ENCODE measurements at regions of chr1 and their contacts with region 1.

Region 1: GRCh38 chr1:242023805-242024204 is 24.9 kb upstream of the MAP1LC3C start:
- DNase-seq: no peak
- ATAC-seq: no peak
- H3K4me3 ChIP-seq: no peak overlapping the region
- H3K27ac ChIP-seq: no peak overlapping the region
- H3K4me1 ChIP-seq: no peaks in the 10 kb centered on the region
- H3K27me3 ChIP-seq: peaks cover 0 to 5% (median 0%) of the 10 kb centered on the region in 9 donors
- CTCF ChIP-seq: no peak
- POLR2A ChIP-seq: no peak

Region 2: DNA sequence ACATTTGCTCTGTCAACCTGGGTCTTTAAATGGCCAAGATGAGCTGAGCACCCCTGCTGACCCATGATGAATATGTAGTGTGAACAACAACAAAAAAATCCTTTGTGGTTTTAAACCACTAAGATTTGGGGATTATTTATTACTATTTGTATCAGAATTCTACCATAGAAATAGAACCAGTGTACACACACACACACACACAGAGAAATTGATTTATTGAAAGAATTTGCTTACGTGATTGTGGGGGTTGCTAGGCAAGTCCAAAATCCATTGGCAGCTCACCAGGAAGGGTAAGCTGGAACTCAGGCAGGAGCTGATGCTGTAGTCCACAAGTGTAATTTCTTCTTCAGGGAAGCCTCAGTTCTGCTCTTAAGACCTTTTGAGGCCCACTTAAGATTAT is 57.6 kb after region 1 on chr1:
- intact Hi-C with region 1: no loop called
- DNase-seq: no peak
- ATAC-seq: no peak
- H3K4me3 ChIP-seq: no peak overlapping the region
- H3K27ac ChIP-seq: no peak overlapping the region
- H3K4me1 ChIP-seq: no peaks in the 10 kb centered on the region
- H3K27me3 ChIP-seq: no peaks in the 10 kb centered on the region
- CTCF ChIP-seq: no peak
- POLR2A ChIP-seq: no peak

Region 3: GRCh38 chr1:242318140-242318539 is 294.3 kb after region 1 on chr1:
- intact Hi-C with region 1: no loop called
- DNase-seq: peak in 1 of 5 donors; percentile 17
- ATAC-seq: no peak
- H3K4me3 ChIP-seq: no peak overlapping the region
- H3K27ac ChIP-seq: no peak overlapping the region
- H3K4me1 ChIP-seq: no peaks in the 10 kb centered on the region
- H3K27me3 ChIP-seq: no peaks in the 10 kb centered on the region
- CTCF ChIP-seq: no peak
- POLR2A ChIP-seq: no peak

Region 4: GRCh38 chr1:242454262-242455045 is 430.6 kb after region 1 on chr1:
- intact Hi-C with region 1: loop called in 1 of 10 experiments (anchors 10 kb)
- DNase-seq: no peak
- ATAC-seq: no peak
- H3K4me3 ChIP-seq: no peak overlapping the region
- H3K27ac ChIP-seq: no peak overlapping the region
- H3K4me1 ChIP-seq: no peaks in the 10 kb centered on the region
- H3K27me3 ChIP-seq: peaks cover 0 to 38% (median 0%) of the 10 kb centered on the region in 9 donors
- CTCF ChIP-seq: peak; percentile 38 to 72 (median 57)
- POLR2A ChIP-seq: no peak

Measured in heart left ventricle (tissue), 16 donors.